ENCODE measurements at regions of chr2 and their contacts with region 1.

Region 1: DNA sequence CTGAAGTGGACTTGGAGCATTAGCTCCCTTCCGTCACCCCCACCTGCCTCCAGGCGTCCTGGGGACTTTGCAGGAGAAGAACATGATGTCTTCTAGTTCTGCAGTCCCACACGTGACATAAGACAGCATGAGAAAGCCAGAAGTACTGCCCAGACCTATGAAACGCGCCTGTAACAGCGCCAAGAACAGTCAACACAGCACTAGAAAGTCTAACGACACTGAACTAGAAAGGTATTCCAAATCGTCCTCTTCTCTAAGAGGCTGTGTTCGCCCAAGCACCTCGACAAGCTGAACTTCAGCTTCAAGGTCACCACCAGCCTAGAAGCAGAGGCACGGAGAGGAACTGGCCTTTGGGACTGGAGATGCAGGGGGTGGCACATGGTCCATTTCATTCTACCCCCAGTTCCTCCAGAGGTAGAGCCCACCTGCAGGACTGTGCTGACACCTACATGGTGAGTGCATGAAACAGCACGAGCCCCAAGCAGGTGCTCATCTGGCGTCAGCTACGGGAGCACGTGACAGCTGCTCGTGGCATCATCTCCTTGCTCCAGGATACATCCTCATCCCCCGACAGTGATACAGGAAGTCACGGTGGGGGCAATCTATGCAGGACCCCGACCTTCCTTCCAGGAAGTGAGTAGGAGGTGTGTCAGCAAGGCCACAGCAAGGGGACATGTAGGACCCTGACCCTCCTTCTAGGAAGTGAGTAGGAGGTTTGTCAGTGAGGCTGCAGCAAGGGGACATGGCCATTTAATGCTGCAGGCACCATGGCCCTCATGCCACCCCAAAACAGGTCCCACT is 3.7 kb downstream of the HDAC4 start:
- DNase-seq: no peak
- H3K4me3 ChIP-seq: no peak overlapping the region
- H3K27ac ChIP-seq: no peak overlapping the region
- H3K4me1 ChIP-seq: peaks cover 12 to 43% of the 10 kb centered on the region in 2 experiments; a peak in 3 of 4 replicates
- H3K27me3 ChIP-seq: no peaks in the 10 kb centered on the region
- CTCF ChIP-seq: no peak
- EP300 ChIP-seq: no peak
- RAD21 ChIP-seq: peak; percentile 48

Region 2: DNA sequence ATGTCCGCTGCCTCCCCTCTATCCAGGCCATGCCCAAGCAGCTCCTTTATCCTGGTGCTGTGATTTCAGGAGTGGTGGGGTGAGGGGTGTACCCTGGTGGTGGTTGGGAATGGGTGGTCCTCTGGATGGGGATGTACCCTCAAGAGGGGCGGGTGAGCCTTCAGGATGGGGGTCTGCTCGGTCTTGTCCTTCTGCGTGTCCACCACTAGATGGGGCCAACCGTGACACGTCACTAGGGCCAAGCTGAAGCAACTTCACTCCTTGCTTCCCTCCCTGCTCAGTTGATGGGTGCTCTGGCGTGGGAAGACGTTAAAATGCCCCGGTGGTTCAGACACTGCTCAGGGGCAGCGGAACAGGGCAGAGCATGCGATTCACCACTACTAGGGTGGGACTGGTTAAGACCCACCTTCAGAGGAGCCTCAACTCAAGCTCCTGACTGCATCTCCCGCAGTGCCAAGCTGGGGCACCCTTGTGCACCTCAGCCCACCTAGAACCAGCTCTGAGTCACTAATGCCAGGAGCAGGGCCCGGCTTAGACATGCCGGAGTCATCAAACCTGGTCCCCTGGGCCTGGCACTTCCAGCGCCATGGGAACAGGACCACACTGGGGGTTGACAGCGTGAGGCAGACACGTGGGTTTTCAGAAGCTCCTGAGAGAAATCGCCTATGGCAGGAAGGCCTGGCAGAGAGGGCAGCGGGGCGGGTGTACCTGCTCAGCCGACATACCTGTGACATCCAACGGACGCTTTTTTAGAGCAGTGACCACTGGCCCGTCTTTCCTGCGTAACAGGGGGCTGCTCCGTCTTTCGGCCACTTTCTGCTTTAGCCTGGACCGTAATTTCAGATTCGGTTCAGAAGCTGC is 253.0 kb before region 1 on chr2:
- CTCF ChIA-PET with region 1: interaction called, 10 read pairs
- POLR2A ChIA-PET with region 1: no interaction called
- DNase-seq: peak; percentile 85
- H3K4me3 ChIP-seq: no peak overlapping the region
- H3K27ac ChIP-seq: no peak overlapping the region
- H3K4me1 ChIP-seq: no peaks in the 10 kb centered on the region; a peak in 1 of 4 replicates
- H3K27me3 ChIP-seq: no peaks in the 10 kb centered on the region
- CTCF ChIP-seq: peak; percentile 68
- EP300 ChIP-seq: no peak
- RAD21 ChIP-seq: peak; percentile 71

Region 3: DNA sequence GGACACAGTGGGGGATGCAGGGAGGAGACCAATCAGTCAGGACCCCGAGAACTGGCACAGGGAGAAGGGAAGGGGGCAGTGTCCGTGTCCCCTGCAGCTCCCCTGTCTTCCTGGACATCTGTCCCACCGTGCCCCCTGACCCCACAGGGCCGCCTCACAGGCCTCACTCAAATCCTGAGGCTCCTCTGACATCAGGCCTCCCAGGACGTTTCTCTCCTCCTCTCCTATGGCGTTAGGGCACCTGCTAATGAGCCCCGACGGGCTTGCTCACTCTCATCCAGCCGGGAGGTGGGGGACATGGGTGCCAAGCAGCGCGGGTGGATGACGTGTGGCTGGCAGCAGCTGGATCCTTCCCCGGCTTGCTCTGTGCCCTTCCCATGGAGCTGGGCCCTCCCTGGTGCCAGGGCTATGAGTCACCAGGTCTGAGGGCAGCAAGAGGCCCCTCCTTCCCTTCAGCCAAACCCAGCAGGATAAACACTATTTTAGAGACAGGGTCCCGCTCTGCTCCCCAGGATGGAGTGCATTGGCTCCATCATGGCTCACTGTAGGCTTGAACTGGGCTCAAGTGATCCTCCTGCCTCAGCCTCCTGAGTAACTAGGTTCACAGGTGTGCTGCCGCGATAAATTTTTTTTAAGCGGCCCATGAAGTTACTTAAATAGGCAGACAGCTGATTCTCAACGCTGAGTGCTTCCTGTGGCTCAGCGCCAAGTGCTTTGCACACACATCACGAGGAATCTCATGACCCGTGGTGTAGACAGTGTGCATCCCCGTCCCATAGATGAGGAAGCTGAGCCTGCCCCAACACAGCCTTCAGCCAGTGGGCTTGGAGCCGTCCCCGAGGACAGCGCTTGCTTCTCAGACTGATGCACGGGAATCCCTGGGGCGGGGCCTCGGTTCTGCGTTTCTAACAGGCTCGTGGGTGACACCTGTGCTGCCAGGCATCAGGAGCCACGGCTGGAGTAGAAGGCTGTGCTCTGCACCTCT is 68.2 kb after region 1 on chr2:
- CTCF ChIA-PET with region 1: no interaction called
- POLR2A ChIA-PET with region 1: no interaction called
- DNase-seq: no peak
- H3K4me3 ChIP-seq: no peak overlapping the region
- H3K27ac ChIP-seq: no peak overlapping the region
- H3K4me1 ChIP-seq: peaks cover 0 to 12% of the 10 kb centered on the region in 2 experiments; a peak in 1 of 4 replicates
- H3K27me3 ChIP-seq: no peaks in the 10 kb centered on the region
- CTCF ChIP-seq: no peak
- EP300 ChIP-seq: no peak
- RAD21 ChIP-seq: no peak

Measured in SK-N-SH (cell line).